ENCODE measurements at regions of chr10 and their contacts with region 1.

Region 1: GRCh38 chr10:100670828-100671479 is 74.4 kb upstream of the PAX2 start:
- DNase-seq: peak; percentile 93
- H3K4me3 Mint-ChIP-seq: peak overlapping the region; percentile 51
- H3K27ac Mint-ChIP-seq: no peak overlapping the region
- H3K4me1 Mint-ChIP-seq: peaks cover 5% of the 10 kb centered on the region
- H3K27me3 Mint-ChIP-seq: peaks cover 61% of the 10 kb centered on the region

Region 2: GRCh38 chr10:100043801-100044200 is 627.2 kb before region 1 on chr10:
- intact Hi-C with region 1: no loop called
- DNase-seq: no peak
- H3K4me3 Mint-ChIP-seq: no peak overlapping the region
- H3K27ac Mint-ChIP-seq: no peak overlapping the region
- H3K4me1 Mint-ChIP-seq: no peaks in the 10 kb centered on the region
- H3K27me3 Mint-ChIP-seq: no peaks in the 10 kb centered on the region

Region 3: DNA sequence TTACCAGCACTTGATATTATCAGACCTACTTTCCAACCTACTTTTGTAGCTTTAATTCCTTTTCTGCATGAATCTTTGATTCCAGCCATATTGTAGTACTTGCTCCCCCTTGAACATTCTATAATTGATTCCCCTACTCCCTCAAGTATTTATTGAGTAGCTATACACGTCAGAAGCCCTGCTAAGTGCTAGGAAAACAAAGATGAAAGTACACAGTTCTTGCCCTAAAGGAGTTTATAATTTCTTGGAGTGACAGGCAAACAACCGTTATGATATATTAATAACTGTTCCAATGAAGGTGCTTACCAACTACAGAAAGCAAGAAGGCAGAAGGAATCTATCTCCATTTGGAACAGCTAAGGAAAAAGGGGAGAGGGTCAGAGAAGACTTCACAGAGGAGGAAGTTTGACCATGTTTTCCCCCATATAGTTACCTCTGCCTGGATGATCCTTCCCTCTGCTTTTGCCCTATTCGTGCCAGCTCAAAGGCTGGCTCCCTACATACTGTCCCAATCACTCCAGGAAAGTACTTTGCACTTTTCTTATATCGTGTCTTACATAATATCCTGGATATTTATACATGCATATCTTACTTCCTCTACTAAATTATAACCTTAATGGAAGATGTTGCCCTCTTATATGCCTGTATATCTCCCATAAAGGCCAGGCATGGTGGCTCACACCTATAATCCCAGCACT is 269.2 kb before region 1 on chr10:
- intact Hi-C with region 1: no loop called
- DNase-seq: no peak
- H3K4me3 Mint-ChIP-seq: no peak overlapping the region
- H3K27ac Mint-ChIP-seq: no peak overlapping the region
- H3K4me1 Mint-ChIP-seq: no peaks in the 10 kb centered on the region
- H3K27me3 Mint-ChIP-seq: no peaks in the 10 kb centered on the region

Region 4: DNA sequence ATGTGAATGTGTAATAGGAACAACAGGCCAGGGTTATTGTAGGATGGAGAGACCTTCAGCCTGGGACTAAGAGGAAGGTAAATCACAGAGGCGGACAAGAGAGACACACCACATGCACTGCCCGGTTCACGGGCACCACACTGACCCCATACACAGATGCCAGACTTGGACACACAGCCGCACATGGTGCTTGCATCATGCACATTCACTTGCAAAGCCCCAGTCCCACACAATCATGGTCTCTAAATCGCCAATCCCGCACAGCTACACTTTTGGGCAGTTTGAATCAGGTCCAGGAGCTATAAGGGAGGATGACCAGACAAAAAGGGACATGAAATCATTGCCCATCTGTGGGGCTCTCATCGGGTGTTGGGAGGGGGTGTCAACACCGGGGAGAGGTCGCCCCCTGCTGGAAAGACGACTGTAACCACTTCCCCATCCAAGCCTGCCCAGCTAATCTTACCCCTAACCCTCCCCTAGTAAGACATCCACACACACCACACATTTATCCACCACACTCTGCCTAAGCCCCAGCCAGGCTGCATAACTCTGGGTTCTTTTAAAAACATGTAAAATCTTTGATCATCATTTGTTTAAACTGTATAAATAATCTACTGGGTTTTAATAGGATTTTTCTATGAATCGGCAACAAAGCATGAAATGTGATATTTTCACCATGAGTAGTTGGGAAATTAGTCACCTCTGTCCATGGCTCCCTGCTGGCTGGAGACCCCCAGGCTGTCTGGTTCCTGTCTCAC is 201.3 kb after region 1 on chr10:
- intact Hi-C with region 1: loop called (anchors 2 kb)
- DNase-seq: peak; percentile 84
- H3K4me3 Mint-ChIP-seq: no peak overlapping the region
- H3K27ac Mint-ChIP-seq: no peak overlapping the region
- H3K4me1 Mint-ChIP-seq: no peaks in the 10 kb centered on the region
- H3K27me3 Mint-ChIP-seq: peaks cover 15% of the 10 kb centered on the region